ENCODE measurements at regions of chr11 and their contacts with region 1.

Region 1: DNA sequence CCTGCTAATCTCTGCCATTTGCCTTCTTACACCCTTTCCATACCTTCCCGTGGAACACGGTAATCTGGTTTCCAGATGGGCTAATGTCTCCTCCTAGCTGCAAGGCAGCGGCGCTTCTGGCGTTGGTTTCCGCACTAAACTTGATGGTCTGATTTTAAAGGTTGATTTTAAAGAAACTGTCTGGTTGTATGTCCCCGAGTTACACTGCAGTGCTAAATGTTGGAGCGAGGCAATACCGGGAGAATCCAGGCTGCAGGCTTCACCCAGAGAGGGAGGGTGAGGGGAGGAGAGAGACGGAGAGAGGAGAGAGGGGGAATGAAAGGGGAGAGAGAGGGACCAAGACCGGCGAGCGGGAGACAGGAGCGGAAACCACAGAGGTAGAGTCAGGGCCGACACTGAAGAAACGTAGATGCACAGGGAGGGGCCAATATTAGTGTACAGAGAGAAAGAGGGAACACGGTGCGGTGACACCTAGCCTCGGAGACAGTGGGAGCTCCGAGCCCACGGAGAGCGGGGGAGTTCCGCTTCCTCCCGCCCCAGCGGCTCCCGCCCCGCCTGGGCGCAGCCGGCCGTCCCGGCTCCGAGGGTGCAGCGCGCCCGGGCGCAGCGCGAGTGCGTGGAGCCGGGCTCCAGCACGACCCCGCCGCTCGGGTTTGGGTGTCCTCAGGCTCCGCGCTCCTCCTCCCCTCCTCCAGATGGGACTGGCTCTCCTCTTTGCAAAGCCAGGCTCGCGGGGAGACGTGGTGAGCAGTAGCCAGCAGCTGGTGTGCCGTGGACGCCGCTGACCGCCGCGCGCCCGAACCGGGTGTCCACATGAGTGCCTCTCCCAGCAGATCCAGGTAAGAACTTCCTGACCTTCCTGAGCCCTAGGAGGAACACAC is 71.9 kb upstream of the GRAMD1B start:
- DNase-seq: peak in 1 of 2 donors; percentile 19
- ATAC-seq: peak; percentile 65 to 80
- H3K4me3 ChIP-seq: peak overlapping the region; percentile 37 to 60 (median 54)
- H3K27ac ChIP-seq: peak overlapping the region in 1 of 4 donors; percentile 30
- H3K4me1 ChIP-seq: peaks cover 0 to 14% of the 10 kb centered on the region in 2 donors
- H3K27me3 ChIP-seq: peaks cover 0 to 8% (median 4%) of the 10 kb centered on the region in 3 donors
- CTCF ChIP-seq: peak; percentile 11 to 43 (median 30)
- POLR2A ChIP-seq: no peak

Region 2: GRCh38 chr11:123301696-123302400 is 56.4 kb before region 1 on chr11:
- in situ Hi-C with region 1: loop called in 3 of 4 experiments (anchors 5 to 10 kb)
- intact Hi-C with region 1: loop called (anchors 1 kb)
- DNase-seq: peak; percentile 15 to 30
- ATAC-seq: peak; percentile 61 to 72
- H3K4me3 ChIP-seq: peak overlapping the region; percentile 38 to 60 (median 52)
- H3K27ac ChIP-seq: no peak overlapping the region
- H3K4me1 ChIP-seq: peaks cover 11 to 18% of the 10 kb centered on the region in 2 donors
- H3K27me3 ChIP-seq: no peaks in the 10 kb centered on the region
- CTCF ChIP-seq: peak; percentile 74 to 97 (median 89)
- POLR2A ChIP-seq: no peak

Region 3: DNA sequence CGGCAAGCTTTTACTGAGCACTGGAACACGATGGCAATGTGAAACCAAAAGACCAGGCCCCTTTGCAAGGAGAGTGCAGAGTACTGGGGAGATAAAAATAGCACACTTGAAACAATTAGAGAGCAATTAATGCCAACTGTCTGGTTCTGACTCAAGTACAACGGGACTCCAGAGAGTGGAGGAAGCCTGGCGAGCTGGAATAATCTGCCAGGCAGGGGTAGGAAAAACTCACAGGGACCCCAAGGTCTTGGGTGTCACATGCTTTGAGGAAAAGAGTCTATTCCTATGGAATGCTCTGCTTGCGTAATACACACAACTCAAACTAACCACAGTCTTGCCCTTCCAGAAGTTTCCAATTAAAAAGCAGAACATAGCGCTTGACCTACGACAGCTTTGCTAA is 50.1 kb before region 1 on chr11:
- in situ Hi-C with region 1: loop called in 3 of 4 experiments (anchors 5 to 10 kb)
- intact Hi-C with region 1: no loop called
- DNase-seq: no peak
- ATAC-seq: peak; percentile 79 to 95
- H3K4me3 ChIP-seq: no peak overlapping the region
- H3K27ac ChIP-seq: peak overlapping the region; percentile 50 to 80 (median 64)
- H3K4me1 ChIP-seq: peaks cover 14 to 19% of the 10 kb centered on the region in 2 donors
- H3K27me3 ChIP-seq: no peaks in the 10 kb centered on the region
- CTCF ChIP-seq: no peak
- POLR2A ChIP-seq: no peak